Aorta (tissue), 5 donors: ENCODE measurements at regions of chr5 and their contacts with region 1.

Region 1: GRCh38 chr5:133423618-133424282 is 188.6 kb downstream of the FSTL4 start:
- DNase-seq: peak; percentile 62 to 91
- ATAC-seq: peak; percentile 77
- H3K4me3 ChIP-seq: no peak overlapping the region
- H3K27ac ChIP-seq: no peak overlapping the region
- H3K4me1 ChIP-seq: no peaks in the 10 kb centered on the region
- H3K27me3 ChIP-seq: no peaks in the 10 kb centered on the region

Region 2: DNA sequence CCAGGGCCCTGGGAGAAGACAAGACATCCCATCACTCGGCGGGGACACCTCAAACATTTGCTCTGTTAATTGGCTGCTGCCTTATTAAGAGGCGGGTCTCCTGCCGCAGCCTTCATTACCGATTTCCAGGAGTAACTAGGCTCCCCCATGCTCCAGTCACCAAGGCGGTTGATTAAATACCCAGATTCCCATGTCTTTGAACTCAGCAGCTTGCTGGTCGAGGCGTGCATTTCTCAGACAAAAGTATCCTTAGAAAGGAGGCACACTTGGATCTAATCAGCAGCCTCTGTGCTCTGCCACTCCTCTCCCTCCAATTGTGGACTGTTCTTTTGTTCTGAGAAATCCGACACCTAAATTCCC is 40.2 kb before region 1 on chr5:
- intact Hi-C with region 1: no loop called
- DNase-seq: no peak
- ATAC-seq: no peak
- H3K4me3 ChIP-seq: no peak overlapping the region
- H3K27ac ChIP-seq: no peak overlapping the region
- H3K4me1 ChIP-seq: no peaks in the 10 kb centered on the region
- H3K27me3 ChIP-seq: no peaks in the 10 kb centered on the region

Region 3: DNA sequence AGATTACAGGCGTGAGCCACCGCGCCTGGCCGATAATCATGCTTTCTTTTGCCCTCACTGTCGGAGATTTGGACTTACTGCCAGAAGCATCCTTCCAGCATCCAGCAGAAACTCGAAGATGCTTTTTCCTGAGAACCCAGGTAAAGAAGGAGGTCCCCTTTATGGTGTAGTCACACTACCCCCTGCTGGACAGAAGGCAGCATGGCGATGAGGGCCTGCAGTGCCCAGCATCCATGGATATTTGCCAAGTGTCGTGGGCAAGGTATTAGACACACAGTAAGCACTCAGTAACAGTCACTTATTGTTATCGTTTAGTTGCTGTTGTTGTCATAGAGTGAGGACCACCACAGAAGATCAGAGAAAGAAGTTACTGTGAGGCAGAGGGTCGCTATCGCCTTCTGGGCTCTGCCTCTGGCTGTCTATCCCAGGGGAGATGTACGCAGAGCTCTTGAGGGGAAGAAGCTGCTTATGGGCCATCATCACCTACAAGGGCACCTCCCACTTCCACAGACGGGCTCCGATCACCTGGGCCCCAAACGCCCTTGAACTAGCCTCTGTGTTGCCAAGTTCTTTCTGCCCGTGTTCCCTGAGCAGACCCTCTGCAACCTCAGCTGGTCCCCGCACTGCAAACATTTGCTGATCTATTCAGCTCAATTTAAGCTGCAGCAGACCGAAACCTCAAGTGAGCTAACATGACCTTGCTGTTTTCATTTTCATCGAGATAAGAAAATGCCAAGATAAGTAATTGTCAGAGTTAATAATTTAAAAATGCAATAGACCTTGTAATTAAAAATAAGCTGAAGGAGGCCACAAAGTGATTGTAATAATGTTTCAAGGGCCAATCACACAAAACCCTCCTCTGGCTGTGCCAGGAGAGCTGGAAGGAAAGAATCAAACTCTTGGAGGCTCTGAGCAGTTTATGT is 520.8 kb after region 1 on chr5:
- intact Hi-C with region 1: loop called in 1 of 2 experiments (anchors 5 kb)
- DNase-seq: no peak
- ATAC-seq: peak; percentile 53
- H3K4me3 ChIP-seq: no peak overlapping the region
- H3K27ac ChIP-seq: no peak overlapping the region
- H3K4me1 ChIP-seq: peaks cover 3 to 5% of the 10 kb centered on the region in 2 donors
- H3K27me3 ChIP-seq: no peaks in the 10 kb centered on the region

Region 4: DNA sequence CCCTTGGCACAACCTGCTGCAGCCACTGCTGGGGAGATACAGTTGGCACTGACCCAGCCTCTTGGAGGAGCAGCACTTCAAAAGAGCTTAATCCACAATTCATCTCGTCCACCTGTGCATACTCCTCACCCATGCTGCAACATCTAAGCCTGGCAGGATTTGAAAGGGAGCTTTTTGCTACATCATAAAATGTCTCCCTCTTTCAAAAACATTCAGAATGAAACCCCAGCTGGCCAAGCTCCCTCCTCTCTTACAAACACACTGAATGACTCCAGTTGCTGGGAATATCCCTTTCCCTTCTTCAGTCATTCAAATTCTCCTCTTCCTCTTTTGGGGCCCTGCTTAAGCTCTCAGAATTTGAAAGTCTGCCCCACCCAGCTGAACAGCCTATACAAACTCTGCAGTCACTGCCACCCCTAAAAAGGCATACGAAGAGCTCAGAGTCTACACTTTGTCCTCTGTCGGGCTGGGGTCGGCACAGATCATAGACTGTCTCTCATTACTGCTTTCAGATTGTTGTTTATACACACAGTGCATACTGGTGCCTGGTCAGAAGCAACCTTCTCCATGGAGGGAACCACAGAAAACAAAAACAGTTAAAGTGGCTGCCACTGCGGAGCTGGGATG is 553.5 kb after region 1 on chr5:
- intact Hi-C with region 1: loop called in 1 of 2 experiments (anchors 10 kb)
- DNase-seq: no peak
- ATAC-seq: no peak
- H3K4me3 ChIP-seq: no peak overlapping the region
- H3K27ac ChIP-seq: no peak overlapping the region
- H3K4me1 ChIP-seq: no peaks in the 10 kb centered on the region
- H3K27me3 ChIP-seq: no peaks in the 10 kb centered on the region